Left cardiac atrium (tissue), 4 donors: ENCODE measurements at regions of chr1 and their contacts with region 1.

Region 1: GRCh38 chr1:28259307-28260167 is at the start of gene SESN2:
- DNase-seq: peak; percentile 100
- ATAC-seq: peak; percentile 96 to 97
- total RNA-seq, gene SESN2: 4.4 to 4.5 TPM

Region 2: DNA sequence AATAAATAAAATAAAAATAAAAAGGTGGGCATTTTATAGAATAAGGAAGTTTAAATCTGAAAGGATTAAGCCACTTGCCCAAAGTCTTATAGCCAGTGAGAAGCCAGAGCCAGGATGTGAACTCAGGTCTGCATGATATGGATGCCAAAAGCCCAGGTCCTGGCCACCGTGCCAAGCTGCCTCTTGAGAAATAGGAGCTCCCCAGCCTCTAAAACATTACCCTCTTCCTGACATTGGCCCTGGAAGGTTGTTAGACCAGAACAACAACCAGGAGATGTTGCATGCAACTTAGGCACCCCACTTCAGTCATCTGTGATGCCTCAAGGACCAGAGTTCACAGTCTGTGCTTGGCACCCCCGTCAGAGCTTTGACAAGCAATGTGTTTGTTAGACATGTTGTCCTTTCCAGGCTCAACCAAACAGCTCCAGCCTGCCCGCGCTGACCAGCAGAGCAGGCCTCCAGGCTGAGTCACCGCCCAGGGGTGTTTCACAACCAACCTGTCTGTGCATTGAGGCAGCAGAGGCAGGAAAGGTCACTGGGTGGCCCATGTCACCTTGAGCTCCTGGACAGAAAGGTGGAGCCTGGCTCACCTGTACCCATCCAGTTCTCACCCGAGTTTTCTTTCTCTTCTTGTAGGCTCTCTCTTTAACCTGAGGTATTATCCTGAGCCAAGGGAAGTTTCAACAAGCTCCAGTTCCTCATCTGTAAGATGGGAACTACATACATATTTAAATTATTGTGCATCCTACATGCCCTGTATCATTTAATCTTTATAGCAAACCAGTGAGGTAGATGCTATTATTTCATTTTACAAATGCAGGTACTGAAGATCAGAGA is 54.4 kb after region 1 on chr1:
- intact Hi-C with region 1: loop called in 1 of 2 experiments (anchors 10 kb)
- DNase-seq: peak; percentile 48
- ATAC-seq: peak in 1 of 2 donors; percentile 71